Motor neuron (in vitro differentiated cells): ENCODE measurements at regions of chr2 and their contacts with region 1.

Region 1: DNA sequence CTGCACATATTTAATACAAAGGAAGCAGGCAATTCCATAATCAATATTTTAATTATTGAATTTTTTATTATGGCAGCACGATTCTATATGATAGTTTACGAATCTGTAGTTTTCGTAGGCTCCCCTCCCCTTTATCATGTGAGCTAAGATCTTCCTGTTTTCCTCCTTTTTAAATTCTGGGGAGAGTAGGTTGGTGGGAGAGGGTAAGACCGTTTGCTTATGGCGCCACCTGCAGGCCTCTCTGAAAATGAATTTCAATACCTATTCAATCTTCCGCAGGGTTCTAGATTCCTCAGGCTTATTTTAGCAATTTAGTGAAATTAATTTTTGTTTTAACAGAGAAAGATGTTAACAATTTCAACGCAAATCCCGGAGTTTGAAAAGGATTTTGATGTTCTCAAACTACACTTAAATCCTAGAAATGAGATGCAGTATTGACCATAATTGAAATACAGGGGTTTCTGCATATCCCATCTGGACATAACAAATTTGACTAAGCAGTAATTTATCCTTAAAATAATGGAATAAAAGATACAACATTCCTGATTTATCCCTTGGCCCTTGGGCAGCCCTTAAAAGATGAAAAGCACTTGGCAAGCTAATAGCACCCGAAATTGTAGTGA is 12.8 kb upstream of the GBX2 start:
- ATAC-seq: peak in 7 of 8 experiments; percentile 17 to 60 (median 39)
- H3K4me3 ChIP-seq: no peak overlapping the region
- H3K27ac ChIP-seq: no peak overlapping the region
- H3K4me1 ChIP-seq: peaks cover 12 to 15% of the 10 kb centered on the region in 2 donors

Region 2: GRCh38 chr2:235779444-235779896 is 401.5 kb before region 1 on chr2:
- in situ Hi-C with region 1: loop called (anchors 10 to 25 kb)
- ATAC-seq: peak; percentile 98 to 100 (median 98)
- H3K4me3 ChIP-seq: no peak overlapping the region
- H3K27ac ChIP-seq: no peak overlapping the region
- H3K4me1 ChIP-seq: peaks cover 4 to 13% of the 10 kb centered on the region in 2 donors

Region 3: DNA sequence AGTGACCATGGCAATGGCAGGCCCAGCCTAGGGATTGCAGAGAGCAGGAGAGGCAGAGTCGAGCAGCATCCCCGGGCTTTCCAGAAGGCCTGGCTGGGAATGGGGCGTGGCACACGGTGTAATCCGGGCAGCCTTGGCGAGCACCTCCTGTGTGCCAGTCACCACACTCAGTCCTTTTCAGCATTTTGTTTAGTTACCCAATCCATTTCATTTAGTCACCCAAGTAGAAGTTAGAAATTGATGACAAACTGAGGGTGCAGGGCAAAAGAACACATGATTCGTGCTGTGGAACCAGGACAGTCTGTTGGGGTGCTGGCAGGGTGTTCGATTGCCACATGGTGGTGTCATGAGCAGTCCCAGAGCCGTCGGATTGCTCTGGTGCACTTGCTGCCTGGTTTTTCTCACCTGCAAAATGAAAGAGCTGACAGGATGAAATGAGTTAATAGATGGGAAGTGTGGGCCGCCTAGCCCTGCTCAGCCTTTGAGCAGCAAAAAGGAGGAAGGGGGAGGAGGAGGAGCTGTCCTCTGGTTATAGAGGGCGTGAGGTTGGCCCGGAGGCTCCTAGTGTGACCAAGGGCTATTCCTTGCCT is 387.7 kb before region 1 on chr2:
- in situ Hi-C with region 1: loop called in 4 of 9 experiments (anchors 10 to 25 kb)
- ATAC-seq: peak in 7 of 8 experiments; percentile 32 to 85 (median 78)
- H3K4me3 ChIP-seq: no peak overlapping the region
- H3K27ac ChIP-seq: no peak overlapping the region
- H3K4me1 ChIP-seq: peaks cover 0 to 4% of the 10 kb centered on the region in 2 donors

Region 4: GRCh38 chr2:235958221-235958931 is 222.6 kb before region 1 on chr2:
- in situ Hi-C with region 1: no loop called
- ATAC-seq: no peak
- H3K4me3 ChIP-seq: no peak overlapping the region
- H3K27ac ChIP-seq: no peak overlapping the region
- H3K4me1 ChIP-seq: peaks cover 11 to 12% of the 10 kb centered on the region in 2 donors